ENCODE measurements at regions of chr11 and their contacts with region 1.

Region 1: GRCh38 chr11:72179804-72180396 is 12.0 kb upstream of the FOLR1 start:
- DNase-seq: no peak
- ATAC-seq: no peak
- H3K4me3 ChIP-seq: no peak overlapping the region
- H3K27ac ChIP-seq: no peak overlapping the region
- H3K4me1 ChIP-seq: peaks cover 0 to 3% of the 10 kb centered on the region in 2 experiments; a peak in 1 of 5 replicates
- H3K27me3 ChIP-seq: peaks cover 4 to 7% of the 10 kb centered on the region in 2 experiments; a peak in 2 of 5 replicates
- CTCF ChIP-seq: no peak
- EP300 ChIP-seq: no peak
- POLR2A ChIP-seq: no peak
- RAD21 ChIP-seq: no peak

Region 2: GRCh38 chr11:71977743-71978418 is 202.0 kb before region 1 on chr11:
- CTCF ChIA-PET with region 1: no interaction called
- POLR2A ChIA-PET with region 1: no interaction called
- in situ Hi-C with region 1: no loop called
- intact Hi-C with region 1: loop called (anchors 1 kb)
- DNase-seq: peak; percentile 37 to 67 (median 40)
- ATAC-seq: peak; percentile 88
- H3K4me3 ChIP-seq: no peak overlapping the region
- H3K27ac ChIP-seq: no peak overlapping the region
- H3K4me1 ChIP-seq: no peaks in the 10 kb centered on the region
- H3K27me3 ChIP-seq: no peaks in the 10 kb centered on the region
- CTCF ChIP-seq: peak; percentile 68 to 80 (median 75); a peak in 5 of 6 replicates
- EP300 ChIP-seq: no peak
- POLR2A ChIP-seq: no peak
- RAD21 ChIP-seq: peak; percentile 50 to 76; a peak in 3 of 4 replicates

Region 3: GRCh38 chr11:72030472-72031045 is 149.3 kb before region 1 on chr11:
- CTCF ChIA-PET with region 1: interaction called, 8 read pairs
- POLR2A ChIA-PET with region 1: no interaction called
- in situ Hi-C with region 1: loop called (anchors 10 kb)
- intact Hi-C with region 1: loop called (anchors 1 kb)
- DNase-seq: no peak
- ATAC-seq: no peak
- H3K4me3 ChIP-seq: no peak overlapping the region
- H3K27ac ChIP-seq: no peak overlapping the region
- H3K4me1 ChIP-seq: no peaks in the 10 kb centered on the region
- H3K27me3 ChIP-seq: no peaks in the 10 kb centered on the region
- CTCF ChIP-seq: no peak
- EP300 ChIP-seq: no peak
- POLR2A ChIP-seq: no peak
- RAD21 ChIP-seq: no peak

Region 4: GRCh38 chr11:72102946-72103753 is 76.8 kb before region 1 on chr11 and contains the start of gene LAMTOR1:
- CTCF ChIA-PET with region 1: no interaction called
- POLR2A ChIA-PET with region 1: no interaction called
- in situ Hi-C with region 1: no loop called
- intact Hi-C with region 1: no loop called
- DNase-seq: peak; percentile 96 to 100 (median 96)
- ATAC-seq: peak; percentile 96
- H3K4me3 ChIP-seq: peak within 1 kb of the TSS; percentile 77
- H3K27ac ChIP-seq: peak within 1 kb of the TSS; percentile 96
- H3K4me1 ChIP-seq: peaks cover 12 to 39% of the 10 kb centered on the region in 2 experiments
- H3K27me3 ChIP-seq: no peaks in the 10 kb centered on the region
- CTCF ChIP-seq: peak; percentile 49 to 71 (median 66)
- EP300 ChIP-seq: no peak; the same call in none of the 2 replicates
- POLR2A ChIP-seq: peak; percentile 91
- RAD21 ChIP-seq: peak in 1 of 2 experiments; percentile 32; a peak in 3 of 4 replicates
- polyA plus RNA-seq, gene LAMTOR1: 91.1 to 97.5 TPM

Region 5: GRCh38 chr11:72222907-72223614 is 43.2 kb after region 1 on chr11:
- CTCF ChIA-PET with region 1: interaction called, 3 read pairs
- POLR2A ChIA-PET with region 1: interaction called, 3 read pairs
- in situ Hi-C with region 1: no loop called
- intact Hi-C with region 1: loop called (anchors 1 kb)
- DNase-seq: peak; percentile 89 to 97 (median 90)
- ATAC-seq: peak; percentile 86
- H3K4me3 ChIP-seq: peak overlapping the region; percentile 84
- H3K27ac ChIP-seq: peak overlapping the region; percentile 88
- H3K4me1 ChIP-seq: peaks cover 24 to 46% of the 10 kb centered on the region in 2 experiments
- H3K27me3 ChIP-seq: no peaks in the 10 kb centered on the region
- CTCF ChIP-seq: peak in 2 of 3 experiments; percentile 30 to 38; a peak in 2 of 6 replicates
- EP300 ChIP-seq: no peak; the same call in 1 of the 2 replicates
- POLR2A ChIP-seq: peak; percentile 74
- RAD21 ChIP-seq: no peak

Region 6: GRCh38 chr11:72238040-72238450 is 58.1 kb after region 1 on chr11:
- CTCF ChIA-PET with region 1: no interaction called
- POLR2A ChIA-PET with region 1: no interaction called
- in situ Hi-C with region 1: no loop called
- intact Hi-C with region 1: loop called (anchors 5 kb)
- DNase-seq: peak; percentile 64 to 84 (median 77)
- ATAC-seq: peak; percentile 94
- H3K4me3 ChIP-seq: no peak overlapping the region
- H3K27ac ChIP-seq: no peak overlapping the region
- H3K4me1 ChIP-seq: peaks cover 0 to 28% of the 10 kb centered on the region in 2 experiments; a peak in 2 of 5 replicates
- H3K27me3 ChIP-seq: no peaks in the 10 kb centered on the region
- CTCF ChIP-seq: peak; percentile 82 to 85 (median 83)
- EP300 ChIP-seq: no peak
- POLR2A ChIP-seq: no peak
- RAD21 ChIP-seq: peak; percentile 34 to 58